Activated T-helper 1 cell treated with anti-CD3 and anti-CD28 coated beads, Interleukin-12 subunit alpha, Interleukin-12 subunit beta, Interleukin-2, Interleukin-4 antibody, amounts not matched to agents 30 ng/mL and 10 ng/mL and 1 ng/mL, durations not matched to agents 14 hours and 24 hours and 36 hours (primary cell): ENCODE measurements at regions of chr3 and their contacts with region 1.

Region 1: DNA sequence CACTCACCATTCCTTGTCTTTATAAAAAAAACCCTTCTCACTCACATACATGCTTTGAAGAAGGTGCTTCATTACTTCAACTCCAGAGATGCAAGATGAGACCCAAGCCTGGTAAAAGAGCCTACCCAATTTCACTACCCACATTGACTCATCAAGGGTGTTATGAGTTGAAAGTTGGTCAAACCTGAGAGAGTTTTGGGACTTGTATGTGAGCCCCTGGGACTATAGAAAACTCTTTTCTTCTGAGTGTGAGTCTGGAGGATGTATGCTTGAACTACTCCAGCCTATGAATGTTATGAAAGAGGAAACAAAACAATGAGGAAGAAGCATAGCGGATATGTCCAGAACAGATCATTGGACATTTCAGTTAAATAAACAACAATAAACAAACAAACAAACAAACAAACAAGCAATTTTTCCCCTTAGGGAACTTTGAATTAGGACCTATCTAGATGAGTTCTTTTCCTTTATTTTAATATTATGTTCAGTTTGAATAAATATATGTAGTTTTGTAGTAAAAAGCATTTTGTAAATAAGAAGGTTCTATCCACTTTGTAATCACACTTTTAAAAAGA is 106.6 kb upstream of the SATB1 start:
- DNase-seq: no peak
- H3K4me3 Mint-ChIP-seq: no peak overlapping the region
- H3K27ac Mint-ChIP-seq: peak overlapping the region; percentile 10
- H3K4me1 Mint-ChIP-seq: peaks cover 21% of the 10 kb centered on the region
- H3K27me3 Mint-ChIP-seq: no peaks in the 10 kb centered on the region

Region 2: GRCh38 chr3:18489939-18490338 is 41.8 kb before region 1 on chr3:
- intact Hi-C with region 1: loop called (anchors 5 kb)
- DNase-seq: peak; percentile 8
- H3K4me3 Mint-ChIP-seq: no peak overlapping the region
- H3K27ac Mint-ChIP-seq: no peak overlapping the region
- H3K4me1 Mint-ChIP-seq: peaks cover 38% of the 10 kb centered on the region
- H3K27me3 Mint-ChIP-seq: no peaks in the 10 kb centered on the region

Region 3: GRCh38 chr3:18546632-18547031 is 14.9 kb after region 1 on chr3:
- intact Hi-C with region 1: loop called (anchors 2 kb)
- DNase-seq: no peak
- H3K4me3 Mint-ChIP-seq: no peak overlapping the region
- H3K27ac Mint-ChIP-seq: no peak overlapping the region
- H3K4me1 Mint-ChIP-seq: no peaks in the 10 kb centered on the region
- H3K27me3 Mint-ChIP-seq: peaks cover 2% of the 10 kb centered on the region